ENCODE measurements at regions of chr5 and their contacts with region 1.

Region 1: GRCh38 chr5:157820593-157821252 is 38.2 kb downstream of the CLINT1 start:
- DNase-seq: no peak
- H3K4me3 Mint-ChIP-seq: no peak overlapping the region
- H3K27ac Mint-ChIP-seq: no peak overlapping the region
- H3K4me1 Mint-ChIP-seq: peaks cover 27% of the 10 kb centered on the region
- H3K27me3 Mint-ChIP-seq: no peaks in the 10 kb centered on the region

Region 2: GRCh38 chr5:157858527-157859226 is 38.0 kb after region 1 on chr5 and contains the start of gene CLINT1:
- intact Hi-C with region 1: no loop called
- DNase-seq: peak; percentile 83
- H3K4me3 Mint-ChIP-seq: peak within 1 kb of the TSS; percentile 86
- H3K27ac Mint-ChIP-seq: peak within 1 kb of the TSS; percentile 98
- H3K4me1 Mint-ChIP-seq: peaks cover 61% of the 10 kb centered on the region
- H3K27me3 Mint-ChIP-seq: no peaks in the 10 kb centered on the region
- total RNA-seq, gene CLINT1: 95.2 and 100 TPM in 2 replicates

Region 3: DNA sequence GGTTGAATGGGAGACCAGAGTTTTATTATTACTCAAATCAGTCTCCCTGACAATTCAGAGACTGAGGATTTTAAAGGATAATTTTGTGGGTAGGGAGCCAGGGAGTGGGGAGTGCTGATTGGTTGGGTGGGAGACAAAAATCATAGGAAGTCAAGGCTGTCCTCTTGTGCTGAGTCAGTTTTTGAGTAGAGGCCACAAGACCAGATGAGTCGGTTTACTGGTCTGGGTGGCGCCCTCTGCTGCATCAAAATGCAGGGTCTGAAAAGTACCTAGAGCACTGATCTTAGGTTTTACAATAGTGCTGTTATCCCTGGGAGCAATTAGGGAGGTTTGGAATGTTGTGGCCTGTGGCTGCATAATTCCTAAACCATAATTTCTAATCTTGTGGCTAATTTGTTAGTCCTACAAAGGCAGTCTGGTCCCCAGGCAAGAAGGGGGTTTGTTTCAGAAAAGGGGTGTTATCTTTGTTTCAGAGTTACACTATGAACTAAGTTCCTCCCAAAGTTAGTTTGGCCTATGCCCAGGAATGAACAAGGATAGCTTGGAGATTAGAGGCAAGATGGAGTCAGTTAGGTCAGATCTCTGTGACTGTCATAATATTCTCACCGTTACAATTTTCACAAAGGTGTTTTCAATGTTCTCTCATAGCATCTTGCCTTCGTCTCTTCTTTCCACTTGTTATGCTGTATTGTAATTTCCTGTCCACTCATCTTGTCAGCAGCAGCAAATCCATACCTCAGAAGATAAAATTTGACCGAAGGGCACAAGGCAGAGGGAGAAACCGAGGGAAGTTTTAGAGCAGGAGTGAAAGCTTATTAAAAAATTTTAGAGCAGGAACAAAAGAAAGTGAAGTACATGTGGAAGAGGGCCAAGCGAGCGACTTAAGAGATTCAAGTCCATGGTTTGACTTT is 97.4 kb after region 1 on chr5:
- intact Hi-C with region 1: loop called (anchors 1 kb)
- DNase-seq: peak; percentile 42
- H3K4me3 Mint-ChIP-seq: no peak overlapping the region
- H3K27ac Mint-ChIP-seq: peak overlapping the region; percentile 84
- H3K4me1 Mint-ChIP-seq: peaks cover 32% of the 10 kb centered on the region
- H3K27me3 Mint-ChIP-seq: no peaks in the 10 kb centered on the region

Region 4: GRCh38 chr5:157948738-157949410 is 128.2 kb after region 1 on chr5:
- intact Hi-C with region 1: loop called (anchors 1 kb)
- DNase-seq: peak; percentile 68
- H3K4me3 Mint-ChIP-seq: no peak overlapping the region
- H3K27ac Mint-ChIP-seq: no peak overlapping the region
- H3K4me1 Mint-ChIP-seq: peaks cover 3% of the 10 kb centered on the region
- H3K27me3 Mint-ChIP-seq: peaks cover 15% of the 10 kb centered on the region

Region 5: DNA sequence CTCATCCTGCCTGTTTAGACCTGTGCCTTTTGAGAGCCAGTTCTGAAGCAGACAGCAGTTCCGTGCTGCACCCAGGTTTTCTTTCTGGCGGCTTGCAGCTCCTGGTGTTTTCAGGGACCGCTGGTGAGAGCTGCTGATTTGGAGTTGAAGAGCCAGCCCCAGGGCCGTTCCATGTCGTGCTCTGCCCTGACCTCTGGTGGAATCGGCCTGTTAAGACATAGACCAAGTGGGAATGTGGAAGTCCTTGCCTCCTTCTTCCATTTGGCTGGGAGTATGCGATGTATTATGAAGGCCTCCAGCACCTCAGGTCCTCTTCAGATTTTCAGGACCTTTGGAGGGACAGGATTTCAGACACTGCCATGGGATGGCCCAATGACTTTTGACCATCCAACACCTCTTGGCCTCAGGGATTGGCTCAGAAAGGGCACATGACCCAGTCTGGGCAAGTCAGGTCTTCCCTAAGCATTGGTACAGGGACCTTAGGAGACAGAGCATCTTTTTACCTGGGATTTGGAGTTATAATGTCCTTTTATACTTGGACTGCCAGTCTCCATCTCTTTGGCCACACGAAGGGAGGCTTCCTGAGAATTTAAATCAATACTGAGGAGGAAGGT is 174.3 kb after region 1 on chr5:
- intact Hi-C with region 1: loop called (anchors 1 kb)
- DNase-seq: peak; percentile 21
- H3K4me3 Mint-ChIP-seq: no peak overlapping the region
- H3K27ac Mint-ChIP-seq: no peak overlapping the region
- H3K4me1 Mint-ChIP-seq: peaks cover 14% of the 10 kb centered on the region
- H3K27me3 Mint-ChIP-seq: peaks cover 34% of the 10 kb centered on the region

Measured in activated T-helper 2 cell treated with anti-CD3 and anti-CD28 coated beads, Interferon-gamma antibody, Interleukin-2, Interleukin-4, amounts not matched to agents 10 μg/mL and 5 μg/mL and 100 μg/mL, durations not matched to agents 14 hours and 24 hours and 36 hours (primary cell).